ENCODE measurements at regions of chr17 and their contacts with region 1.

Region 1: GRCh38 chr17:80832888-80833583 is 158.6 kb upstream of the CHMP6 start:
- DNase-seq: peak; percentile 78 to 90
- ATAC-seq: peak; percentile 94 to 97 (median 96)
- H3K4me3 ChIP-seq: peak overlapping the region in 9 of 10 donors; percentile 15 to 59 (median 50)
- H3K27ac ChIP-seq: peak overlapping the region; percentile 27 to 93 (median 80)
- H3K4me1 ChIP-seq: peaks cover 0 to 27% (median 16%) of the 10 kb centered on the region in 9 donors
- H3K27me3 ChIP-seq: no peaks in the 10 kb centered on the region
- CTCF ChIP-seq: no peak

Region 2: DNA sequence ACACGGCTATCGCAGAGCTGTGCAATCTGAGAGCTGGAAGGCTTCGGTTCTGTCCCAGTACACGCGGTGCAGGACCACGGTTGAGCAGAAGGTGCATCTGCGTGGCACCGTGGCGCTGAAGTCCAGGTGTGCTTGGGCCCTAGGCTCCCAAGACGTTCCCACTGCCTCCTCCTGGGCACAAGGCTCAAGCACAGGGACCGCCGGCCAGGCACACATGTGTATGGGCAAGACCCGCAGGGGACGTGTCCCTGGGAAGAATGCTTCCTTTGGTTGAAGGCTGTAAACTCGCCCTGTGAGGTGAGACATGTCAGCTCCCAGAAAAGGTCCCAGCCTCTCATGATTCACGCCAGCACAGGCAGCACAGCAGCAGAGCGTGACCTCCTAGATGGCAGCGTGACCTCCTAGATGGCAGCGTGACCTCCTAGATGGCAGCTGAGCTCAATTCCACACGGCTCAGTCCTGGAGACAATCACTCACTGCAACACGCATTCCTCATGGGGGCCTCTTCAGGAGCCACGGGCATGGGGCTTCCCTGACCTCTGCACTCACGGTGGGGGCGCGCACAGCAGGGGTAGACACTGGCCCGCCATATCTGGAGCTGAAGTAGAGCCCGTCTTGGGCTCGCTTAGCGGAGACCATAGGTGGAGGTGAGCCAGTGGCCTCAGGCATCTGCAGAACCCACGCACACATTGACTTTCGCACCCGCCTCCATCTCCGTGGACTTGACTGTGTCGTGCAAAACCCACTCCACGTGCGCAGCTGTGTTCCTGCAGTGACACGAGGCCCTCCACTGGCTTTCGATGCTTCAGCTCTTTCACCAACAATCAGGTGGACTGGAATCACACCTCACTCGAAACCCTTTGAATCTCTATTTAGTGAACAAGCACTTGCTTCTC is 73.6 kb after region 1 on chr17:
- intact Hi-C with region 1: loop called in 1 of 10 experiments (anchors 2 kb)
- DNase-seq: no peak
- ATAC-seq: peak in 1 of 8 donors; percentile 18
- H3K4me3 ChIP-seq: no peak overlapping the region
- H3K27ac ChIP-seq: no peak overlapping the region
- H3K4me1 ChIP-seq: peaks cover 0 to under 1% (median 0%) of the 10 kb centered on the region in 9 donors
- H3K27me3 ChIP-seq: no peaks in the 10 kb centered on the region
- CTCF ChIP-seq: no peak